ENCODE measurements at regions of chr14 and their contacts with region 1.

Region 1: DNA sequence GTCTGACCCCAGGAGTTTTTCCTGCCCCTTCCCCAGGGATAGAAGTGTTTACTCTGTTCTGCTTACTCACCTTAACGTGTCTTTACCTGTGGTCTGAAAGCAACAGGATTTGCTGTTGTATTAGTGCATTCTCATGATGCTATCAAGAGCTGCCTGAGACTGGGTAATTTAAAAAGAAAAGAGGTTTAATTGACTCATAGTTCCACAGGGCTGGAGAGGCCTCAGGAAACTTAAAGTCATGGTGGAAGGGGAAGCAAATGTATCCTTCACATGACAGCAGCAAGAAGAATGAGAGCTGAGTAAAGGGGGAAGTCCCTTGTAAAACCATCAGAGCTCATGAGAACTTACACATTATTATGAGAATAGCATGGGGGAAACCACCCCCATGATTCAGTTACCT is 240.4 kb downstream of the SNAPC1 start:
- DNase-seq: peak; percentile 86
- ATAC-seq: peak; percentile 48
- H3K4me3 ChIP-seq: peak overlapping the region; percentile 55
- H3K27ac ChIP-seq: peak overlapping the region; percentile 98
- H3K4me1 ChIP-seq: peaks cover 31% of the 10 kb centered on the region
- H3K27me3 ChIP-seq: no peaks in the 10 kb centered on the region
- CTCF ChIP-seq: no peak

Region 2: GRCh38 chr14:61269321-61270083 is 733.1 kb before region 1 on chr14:
- CTCF ChIA-PET with region 1: no interaction called
- POLR2A ChIA-PET with region 1: no interaction called
- intact Hi-C with region 1: loop called (anchors 10 kb)
- DNase-seq: peak; percentile 98
- ATAC-seq: peak; percentile 71
- H3K4me3 ChIP-seq: peak overlapping the region; percentile 65
- H3K27ac ChIP-seq: no peak overlapping the region
- H3K4me1 ChIP-seq: peaks cover 6% of the 10 kb centered on the region
- H3K27me3 ChIP-seq: no peaks in the 10 kb centered on the region
- CTCF ChIP-seq: peak; percentile 97

Region 3: GRCh38 chr14:61537563-61538463 is 464.8 kb before region 1 on chr14:
- CTCF ChIA-PET with region 1: no interaction called
- POLR2A ChIA-PET with region 1: interaction called, 10 read pairs
- intact Hi-C with region 1: no loop called
- DNase-seq: peak; percentile 100
- ATAC-seq: peak; percentile 94
- H3K4me3 ChIP-seq: peak overlapping the region; percentile 8; the same call in 1 of the 2 replicates
- H3K27ac ChIP-seq: peak overlapping the region; percentile 90
- H3K4me1 ChIP-seq: peaks cover 58% of the 10 kb centered on the region
- H3K27me3 ChIP-seq: no peaks in the 10 kb centered on the region
- CTCF ChIP-seq: no peak

Region 4: GRCh38 chr14:61568572-61569131 is 434.0 kb before region 1 on chr14:
- CTCF ChIA-PET with region 1: no interaction called
- POLR2A ChIA-PET with region 1: no interaction called
- intact Hi-C with region 1: loop called (anchors 10 kb)
- DNase-seq: peak; percentile 57
- ATAC-seq: peak; percentile 11; the same call in 1 of the 2 replicates
- H3K4me3 ChIP-seq: peak overlapping the region; percentile 11; the same call in 1 of the 2 replicates
- H3K27ac ChIP-seq: peak overlapping the region; percentile 96
- H3K4me1 ChIP-seq: peaks cover 88% of the 10 kb centered on the region
- H3K27me3 ChIP-seq: no peaks in the 10 kb centered on the region
- CTCF ChIP-seq: peak; percentile 21; the same call in 1 of the 2 replicates

Region 5: GRCh38 chr14:61894452-61895077 is 108.1 kb before region 1 on chr14:
- CTCF ChIA-PET with region 1: no interaction called
- POLR2A ChIA-PET with region 1: no interaction called
- intact Hi-C with region 1: loop called (anchors 1 kb)
- DNase-seq: peak; percentile 90
- ATAC-seq: peak; percentile 68
- H3K4me3 ChIP-seq: no peak overlapping the region
- H3K27ac ChIP-seq: no peak overlapping the region
- H3K4me1 ChIP-seq: peaks cover 21% of the 10 kb centered on the region
- H3K27me3 ChIP-seq: no peaks in the 10 kb centered on the region
- CTCF ChIP-seq: peak; percentile 96

Region 6: GRCh38 chr14:61934385-61934784 is 68.3 kb before region 1 on chr14:
- CTCF ChIA-PET with region 1: no interaction called
- POLR2A ChIA-PET with region 1: no interaction called
- intact Hi-C with region 1: loop called (anchors 1 kb)
- DNase-seq: peak; percentile 98
- ATAC-seq: peak; percentile 92
- H3K4me3 ChIP-seq: no peak overlapping the region
- H3K27ac ChIP-seq: peak overlapping the region; percentile 93
- H3K4me1 ChIP-seq: peaks cover 52% of the 10 kb centered on the region
- H3K27me3 ChIP-seq: no peaks in the 10 kb centered on the region
- CTCF ChIP-seq: no peak

Region 7: GRCh38 chr14:62015945-62016344 is 13.3 kb after region 1 on chr14:
- CTCF ChIA-PET with region 1: no interaction called
- POLR2A ChIA-PET with region 1: no interaction called
- intact Hi-C with region 1: no loop called
- DNase-seq: peak; percentile 35
- ATAC-seq: peak; percentile 20
- H3K4me3 ChIP-seq: no peak overlapping the region
- H3K27ac ChIP-seq: no peak overlapping the region
- H3K4me1 ChIP-seq: peaks cover 8% of the 10 kb centered on the region; the same call in 1 of the 2 replicates
- H3K27me3 ChIP-seq: no peaks in the 10 kb centered on the region
- CTCF ChIP-seq: no peak

Region 8: DNA sequence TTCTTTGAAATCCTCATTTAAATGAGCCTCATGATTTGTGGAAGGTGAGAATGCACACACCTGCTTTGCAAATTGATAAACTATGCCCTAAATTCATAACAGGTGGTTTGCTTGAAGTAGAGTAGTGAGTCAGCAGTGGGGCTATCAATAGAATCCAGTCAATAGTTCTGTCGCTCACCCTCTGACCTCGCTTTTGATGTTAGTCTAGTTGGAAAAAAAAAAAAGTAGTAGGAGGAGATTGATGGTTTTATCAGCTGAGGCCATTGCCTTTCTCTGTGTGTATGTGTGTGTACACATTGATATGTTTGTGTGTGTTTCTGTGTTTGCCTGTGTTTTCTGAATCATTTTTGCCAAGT is 26.9 kb after region 1 on chr14:
- CTCF ChIA-PET with region 1: interaction called, 4 read pairs
- POLR2A ChIA-PET with region 1: interaction called, 3 read pairs
- intact Hi-C with region 1: loop called (anchors 1 kb)
- DNase-seq: no peak
- ATAC-seq: no peak
- H3K4me3 ChIP-seq: no peak overlapping the region
- H3K27ac ChIP-seq: no peak overlapping the region
- H3K4me1 ChIP-seq: peaks cover 38% of the 10 kb centered on the region
- H3K27me3 ChIP-seq: no peaks in the 10 kb centered on the region
- CTCF ChIP-seq: no peak

Measured in PC-3 (cell line).